H1 (cell line): ENCODE measurements at regions of chr3 and their contacts with region 1.

Region 1: DNA sequence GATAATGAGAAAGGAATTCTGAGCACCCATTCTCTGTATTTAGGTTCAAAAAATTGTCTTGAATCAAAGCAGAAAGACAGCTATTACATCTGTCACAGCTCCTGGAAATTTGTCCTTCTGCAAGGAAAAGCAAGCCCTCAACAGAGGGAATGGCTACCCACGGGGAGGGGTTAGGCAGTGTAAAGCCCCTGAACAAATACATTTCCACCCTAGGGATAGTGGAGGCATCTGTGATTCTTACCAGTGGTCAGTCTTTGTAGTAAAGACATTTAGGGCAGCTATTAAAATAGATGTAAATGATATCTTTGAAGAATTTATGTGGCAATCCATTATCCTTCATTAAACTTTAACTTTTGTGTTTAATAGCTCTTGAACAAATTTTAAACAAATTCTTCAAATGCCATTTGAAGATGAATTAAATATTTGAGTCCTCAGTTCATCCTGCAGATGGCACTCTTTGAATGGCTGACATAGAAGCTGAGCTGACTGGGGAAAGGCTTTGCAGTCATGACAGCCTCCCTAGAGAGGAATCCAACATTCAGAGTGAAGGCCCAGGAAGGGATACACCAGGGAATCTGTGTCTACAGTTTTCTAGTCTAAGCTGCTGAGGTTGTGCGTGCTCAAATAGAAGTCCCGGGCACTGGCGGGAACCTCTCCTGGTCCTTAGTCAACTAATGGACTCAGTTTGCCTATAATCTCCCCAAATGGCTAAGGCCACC is 359.7 kb upstream of the ROPN1 start:
- DNase-seq: no peak
- H3K4me3 ChIP-seq: no peak overlapping the region
- H3K27ac ChIP-seq: no peak overlapping the region
- H3K4me1 ChIP-seq: no peaks in the 10 kb centered on the region
- H3K27me3 ChIP-seq: no peaks in the 10 kb centered on the region
- CTCF ChIP-seq: peak in 2 of 3 experiments; percentile 53 to 83; a peak in 3 of 4 replicates
- EP300 ChIP-seq: 0 out of 3 replicates have a peak, but pooled peaks of 1 of the 2 experiments have one; percentile 45
- POLR2A ChIP-seq: no peak
- RAD21 ChIP-seq: peak; percentile 92 to 93

Region 2: DNA sequence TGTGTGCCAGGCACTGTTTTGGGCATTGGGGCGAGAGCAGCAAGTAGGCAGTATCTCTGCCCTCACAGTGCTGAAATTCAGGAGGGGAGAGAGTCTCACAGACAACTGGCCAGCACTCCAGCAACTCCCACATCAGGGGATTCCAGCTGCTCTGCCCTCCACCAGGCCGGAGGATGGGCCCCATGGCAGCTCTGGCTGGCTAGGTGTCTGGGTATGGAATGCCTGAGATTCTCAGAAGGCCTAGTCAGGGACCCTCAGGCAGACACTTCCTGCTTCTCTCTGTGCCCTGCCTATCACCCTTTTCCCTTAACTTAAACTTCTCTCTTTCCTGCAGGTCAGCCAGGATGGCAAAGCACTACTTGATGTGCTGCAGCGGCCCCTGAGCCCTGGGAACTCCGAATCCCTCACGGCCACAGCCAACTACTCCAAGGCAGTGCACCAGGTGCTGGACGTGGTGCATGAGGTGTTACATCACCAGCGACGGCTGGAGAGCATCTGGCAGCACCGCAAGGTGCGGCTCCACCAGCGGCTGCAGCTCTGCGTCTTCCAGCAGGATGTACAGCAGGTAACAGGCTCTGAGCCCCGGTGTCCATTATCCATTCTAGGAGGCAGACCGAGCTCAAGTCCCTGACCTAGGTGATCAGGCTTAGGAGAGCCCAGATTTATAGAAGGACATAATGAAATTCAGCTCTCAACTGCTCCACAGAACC is 17.5 kb before region 1 on chr3:
- CTCF ChIA-PET with region 1: interaction called, 14 read pairs
- POLR2A ChIA-PET with region 1: interaction called, 3 read pairs
- DNase-seq: no peak
- H3K4me3 ChIP-seq: no peak overlapping the region
- H3K27ac ChIP-seq: no peak overlapping the region
- H3K4me1 ChIP-seq: no peaks in the 10 kb centered on the region
- H3K27me3 ChIP-seq: no peaks in the 10 kb centered on the region
- CTCF ChIP-seq: no peak
- EP300 ChIP-seq: no peak
- POLR2A ChIP-seq: no peak
- RAD21 ChIP-seq: no peak

Region 3: DNA sequence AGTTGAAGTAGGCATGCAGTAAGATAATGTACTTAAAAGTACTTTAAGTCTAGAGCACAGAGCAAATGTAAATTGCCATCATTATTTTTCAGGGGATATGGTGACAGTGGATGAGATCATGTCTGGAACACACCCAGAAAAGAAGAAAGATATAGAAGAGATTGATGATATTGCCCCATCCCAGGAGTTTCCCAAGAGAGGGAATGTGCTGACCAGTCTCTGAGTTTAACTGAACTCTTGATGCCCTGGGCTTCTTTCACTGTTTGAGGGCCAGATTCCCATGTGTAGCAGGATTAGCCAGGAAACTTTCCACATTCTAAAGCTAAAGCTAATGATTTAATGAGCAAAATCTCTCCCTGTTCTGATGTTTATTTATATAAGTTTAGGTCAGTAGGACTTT is 11.9 kb after region 1 on chr3:
- CTCF ChIA-PET with region 1: interaction called, 12 read pairs
- POLR2A ChIA-PET with region 1: no interaction called
- DNase-seq: no peak
- H3K4me3 ChIP-seq: no peak overlapping the region
- H3K27ac ChIP-seq: no peak overlapping the region
- H3K4me1 ChIP-seq: peaks cover 0 to 8% (median 4%) of the 10 kb centered on the region in 4 experiments; a peak in 6 of 7 replicates
- H3K27me3 ChIP-seq: no peaks in the 10 kb centered on the region
- CTCF ChIP-seq: no peak
- EP300 ChIP-seq: no peak
- POLR2A ChIP-seq: no peak
- RAD21 ChIP-seq: no peak

Region 4: DNA sequence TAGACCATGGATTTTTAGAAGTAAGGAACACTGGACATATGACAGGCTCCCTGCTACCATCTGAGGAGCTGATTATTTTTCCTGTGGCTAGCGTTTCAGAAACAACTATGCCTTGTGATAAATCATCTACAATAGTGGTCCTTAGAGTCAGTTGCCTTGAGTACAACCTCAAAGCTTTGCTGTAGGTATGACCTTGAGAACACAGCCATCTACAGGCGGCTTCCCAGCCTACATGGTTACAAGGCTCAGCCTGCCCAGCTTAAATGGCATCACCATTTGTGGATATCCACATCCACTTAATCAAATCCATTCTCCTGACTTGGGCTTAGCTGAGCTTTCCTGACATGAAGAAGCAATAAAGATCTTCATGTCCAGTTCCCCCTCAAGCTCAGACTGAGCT is 75.7 kb after region 1 on chr3:
- CTCF ChIA-PET with region 1: interaction called, 10 read pairs
- POLR2A ChIA-PET with region 1: no interaction called
- DNase-seq: no peak
- H3K4me3 ChIP-seq: no peak overlapping the region
- H3K27ac ChIP-seq: no peak overlapping the region
- H3K4me1 ChIP-seq: no peaks in the 10 kb centered on the region; a peak in 1 of 7 replicates
- H3K27me3 ChIP-seq: no peaks in the 10 kb centered on the region
- CTCF ChIP-seq: no peak
- EP300 ChIP-seq: no peak
- POLR2A ChIP-seq: no peak
- RAD21 ChIP-seq: peak; percentile 9 to 30; a peak in 3 of 4 replicates

Region 5: DNA sequence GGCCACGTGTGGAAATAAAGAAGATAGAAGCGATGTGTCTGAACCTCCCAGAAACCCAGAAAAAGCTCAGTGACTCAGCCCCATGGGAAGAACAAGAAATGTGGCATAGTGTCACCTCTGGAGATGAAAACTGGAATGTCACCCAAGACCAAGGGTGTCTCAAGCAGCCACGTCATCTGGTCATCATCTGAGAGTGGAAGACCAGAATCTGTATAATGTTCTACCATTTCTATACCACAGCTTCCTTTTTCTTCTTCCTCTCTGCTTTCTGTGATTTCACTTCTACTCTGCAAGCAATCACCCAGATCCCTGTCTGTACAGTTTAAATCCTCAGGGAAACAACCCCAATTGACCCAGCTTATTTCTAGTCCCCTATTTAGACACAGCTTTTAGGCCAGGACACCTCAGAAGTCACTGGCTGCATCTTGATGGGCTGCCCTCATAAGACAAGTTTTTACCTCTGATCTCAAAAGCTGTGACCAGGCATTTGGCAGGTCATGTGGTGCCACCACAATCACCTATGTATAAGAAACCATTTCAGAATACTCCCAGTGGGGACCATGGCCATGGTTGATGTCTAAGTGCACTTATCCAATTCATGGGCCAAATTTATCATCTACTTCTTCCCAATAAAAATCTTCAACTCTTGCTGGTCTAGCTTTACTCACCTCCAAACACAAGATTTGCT is 100.2 kb after region 1 on chr3:
- CTCF ChIA-PET with region 1: interaction called, 11 read pairs
- POLR2A ChIA-PET with region 1: no interaction called
- DNase-seq: no peak
- H3K4me3 ChIP-seq: no peak overlapping the region
- H3K27ac ChIP-seq: no peak overlapping the region
- H3K4me1 ChIP-seq: no peaks in the 10 kb centered on the region
- H3K27me3 ChIP-seq: no peaks in the 10 kb centered on the region
- CTCF ChIP-seq: no peak
- EP300 ChIP-seq: no peak
- POLR2A ChIP-seq: no peak
- RAD21 ChIP-seq: no peak